MCF 10A (cell line): ENCODE measurements at regions of chr1 and their contacts with region 1.

Region 1: DNA sequence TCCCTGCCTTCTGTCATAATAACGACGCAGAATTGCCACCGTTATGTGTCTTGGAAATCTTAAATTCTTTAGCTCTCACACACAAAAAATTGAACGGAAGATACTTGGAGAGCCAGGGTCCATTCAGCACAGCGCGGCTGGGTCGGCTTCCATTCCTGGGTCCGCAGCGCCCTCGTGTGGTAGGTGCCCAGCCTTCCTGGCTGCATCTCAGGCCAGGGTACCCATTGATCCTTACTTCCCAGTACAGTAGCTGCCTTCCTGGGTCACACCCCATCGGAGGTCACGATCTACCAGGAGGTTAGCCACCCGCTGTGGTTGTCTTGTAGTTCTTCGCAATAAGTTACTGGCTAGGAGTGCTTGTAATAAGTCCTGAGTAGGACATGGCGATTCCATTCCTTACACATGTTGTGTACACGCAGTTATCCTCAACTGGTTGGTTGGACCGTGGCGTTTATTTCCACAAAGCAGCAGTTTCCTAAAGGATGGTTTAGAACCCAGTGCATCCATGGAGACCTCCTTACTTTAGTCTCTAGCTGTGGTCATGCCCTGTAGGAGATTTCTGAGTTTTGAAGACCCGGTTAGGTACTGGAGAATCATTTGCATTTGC is 9.9 kb upstream of the MTARC1 start:
- DNase-seq: peak; percentile 88
- H3K4me3 Mint-ChIP-seq: no peak overlapping the region
- H3K27ac Mint-ChIP-seq: no peak overlapping the region
- H3K4me1 Mint-ChIP-seq: no peaks in the 10 kb centered on the region
- H3K27me3 Mint-ChIP-seq: no peaks in the 10 kb centered on the region
- CTCF ChIP-seq: peak; percentile 99

Region 2: DNA sequence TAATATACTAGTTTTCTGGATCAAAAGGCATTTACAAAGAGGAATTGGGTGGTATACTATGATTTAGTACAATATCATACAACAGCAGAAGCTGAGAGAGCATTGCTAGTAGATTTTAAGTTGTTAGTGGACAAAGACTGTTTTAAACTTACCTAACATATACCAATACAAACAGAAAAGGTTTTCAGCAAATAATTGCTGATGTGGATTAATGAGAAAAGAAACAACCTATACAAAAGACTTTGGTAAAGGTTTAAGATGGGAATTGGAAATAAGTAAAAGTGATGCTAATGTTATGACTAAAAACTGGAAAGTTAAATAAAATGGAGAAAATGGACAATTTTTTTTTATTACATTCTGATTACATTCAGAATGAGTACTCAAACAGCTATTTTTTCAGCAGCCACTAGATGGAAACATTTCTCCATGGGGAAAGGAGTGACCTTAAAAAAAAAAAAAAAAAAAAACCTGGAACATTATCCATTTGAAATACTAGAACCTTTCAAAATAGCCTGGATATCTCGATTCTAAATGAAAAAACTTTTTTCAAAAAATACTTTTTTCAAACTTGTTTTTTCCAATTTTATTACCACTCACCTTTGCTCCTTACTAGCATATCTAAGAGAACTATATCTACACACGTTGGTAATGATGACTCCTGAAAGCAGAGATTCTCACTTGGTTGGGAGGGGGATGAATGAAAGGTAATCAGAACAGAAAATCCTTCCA is 785.9 kb before region 1 on chr1:
- CTCF ChIA-PET with region 1: interaction called, 4 read pairs
- POLR2A ChIA-PET with region 1: no interaction called
- intact Hi-C with region 1: loop called (anchors 5 kb)
- DNase-seq: peak; percentile 75
- H3K4me3 Mint-ChIP-seq: no peak overlapping the region
- H3K27ac Mint-ChIP-seq: no peak overlapping the region
- H3K4me1 Mint-ChIP-seq: no peaks in the 10 kb centered on the region
- H3K27me3 Mint-ChIP-seq: no peaks in the 10 kb centered on the region
- CTCF ChIP-seq: peak; percentile 62

Region 3: GRCh38 chr1:220217383-220217988 is 559.3 kb before region 1 on chr1:
- CTCF ChIA-PET with region 1: interaction called, 66 read pairs
- POLR2A ChIA-PET with region 1: no interaction called
- intact Hi-C with region 1: loop called (anchors 1 kb)
- DNase-seq: peak; percentile 55
- H3K4me3 Mint-ChIP-seq: no peak overlapping the region
- H3K27ac Mint-ChIP-seq: no peak overlapping the region
- H3K4me1 Mint-ChIP-seq: peaks cover 25% of the 10 kb centered on the region
- H3K27me3 Mint-ChIP-seq: no peaks in the 10 kb centered on the region
- CTCF ChIP-seq: peak; percentile 52

Region 4: GRCh38 chr1:220680085-220680687 is 96.6 kb before region 1 on chr1:
- CTCF ChIA-PET with region 1: interaction called, 26 read pairs
- POLR2A ChIA-PET with region 1: no interaction called
- intact Hi-C with region 1: loop called (anchors 1 kb)
- DNase-seq: peak; percentile 75
- H3K4me3 Mint-ChIP-seq: no peak overlapping the region
- H3K27ac Mint-ChIP-seq: no peak overlapping the region
- H3K4me1 Mint-ChIP-seq: peaks cover 7% of the 10 kb centered on the region
- H3K27me3 Mint-ChIP-seq: no peaks in the 10 kb centered on the region
- CTCF ChIP-seq: peak; percentile 95

Region 5: GRCh38 chr1:220733090-220733601 is 43.7 kb before region 1 on chr1:
- CTCF ChIA-PET with region 1: interaction called, 58 read pairs
- POLR2A ChIA-PET with region 1: interaction called, 6 read pairs
- intact Hi-C with region 1: loop called (anchors 2 kb)
- DNase-seq: peak; percentile 98
- H3K4me3 Mint-ChIP-seq: peak overlapping the region; percentile 19
- H3K27ac Mint-ChIP-seq: peak overlapping the region; percentile 44
- H3K4me1 Mint-ChIP-seq: peaks cover 32% of the 10 kb centered on the region
- H3K27me3 Mint-ChIP-seq: no peaks in the 10 kb centered on the region
- CTCF ChIP-seq: peak; percentile 99

Region 6: DNA sequence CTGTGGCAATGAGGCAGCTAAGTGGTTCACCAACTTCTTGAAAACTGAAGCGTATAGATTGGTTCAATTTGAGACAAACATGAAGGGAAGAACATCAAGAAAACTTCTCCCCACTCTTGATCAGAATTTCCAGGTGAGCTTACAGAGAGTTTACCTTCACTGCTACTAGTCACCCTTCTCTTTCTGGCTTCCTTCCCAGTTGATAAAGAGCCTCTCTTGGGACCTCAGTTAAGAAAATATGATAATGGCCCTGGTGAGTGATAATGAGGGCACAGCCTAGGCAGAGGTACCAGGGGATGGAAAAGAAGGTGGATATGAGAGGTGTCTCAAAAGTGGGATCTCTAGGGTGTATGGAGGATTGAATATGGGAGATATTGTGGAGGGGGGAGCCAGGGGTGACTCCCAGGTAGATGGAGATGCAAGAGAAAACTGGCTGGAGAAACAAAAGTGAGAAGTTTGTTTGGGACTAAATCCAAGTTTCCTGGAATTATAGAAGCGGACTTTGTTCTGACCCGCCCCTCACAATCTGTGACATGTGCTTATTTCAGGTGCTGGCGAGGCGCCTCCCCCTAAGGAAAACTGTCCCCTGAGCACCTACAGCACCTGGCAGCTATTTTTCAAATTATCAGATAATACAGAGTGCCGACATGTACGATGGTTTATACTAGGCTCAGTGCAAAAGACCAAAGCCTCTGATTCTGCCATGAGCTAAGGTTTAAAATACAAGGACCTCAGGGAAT is 15.0 kb before region 1 on chr1:
- CTCF ChIA-PET with region 1: interaction called, 118 read pairs
- POLR2A ChIA-PET with region 1: no interaction called
- intact Hi-C with region 1: no loop called
- DNase-seq: no peak
- H3K4me3 Mint-ChIP-seq: no peak overlapping the region
- H3K27ac Mint-ChIP-seq: no peak overlapping the region
- H3K4me1 Mint-ChIP-seq: no peaks in the 10 kb centered on the region
- H3K27me3 Mint-ChIP-seq: peaks cover 6% of the 10 kb centered on the region
- CTCF ChIP-seq: no peak